ENCODE measurements at regions of chr11 and their contacts with region 1.

Region 1: DNA sequence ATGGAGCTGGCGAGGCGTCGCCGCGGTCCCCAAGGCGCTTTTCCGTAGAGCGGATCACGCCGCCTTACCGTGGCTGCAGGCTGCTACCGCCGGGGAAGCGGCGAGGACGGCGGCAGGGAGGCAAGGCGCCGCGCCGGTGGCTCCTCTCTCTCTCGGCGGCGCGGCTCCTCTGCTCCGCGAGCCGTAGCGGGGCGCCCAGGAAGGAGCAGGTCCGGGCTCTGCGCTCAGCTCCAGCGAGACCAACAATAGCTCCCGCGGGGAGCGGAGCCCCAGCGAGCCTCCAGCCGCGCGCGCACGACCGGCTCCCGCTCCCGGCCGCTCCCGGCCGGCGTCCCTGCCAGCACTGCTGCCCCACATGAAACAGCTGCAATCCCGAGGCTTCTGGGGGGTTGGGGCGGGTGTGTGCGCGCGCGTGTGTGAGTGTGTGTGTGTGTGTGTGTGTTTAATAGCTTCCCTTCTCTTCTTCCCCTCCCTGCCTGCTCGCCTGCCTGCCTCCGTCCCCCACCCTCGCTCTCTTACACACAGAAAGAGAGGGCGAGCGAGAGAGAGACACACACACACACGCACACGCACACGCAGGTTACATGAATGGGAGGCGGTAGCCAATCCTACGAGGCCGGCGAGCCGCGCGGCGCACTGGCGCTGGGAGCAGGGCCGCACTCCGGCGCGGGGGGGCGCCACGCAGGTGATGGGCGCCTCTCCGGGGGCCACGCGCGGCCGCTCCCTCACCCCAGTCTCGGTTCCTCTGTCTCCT is at the start of gene TENM4:
- DNase-seq: peak in 1 of 2 experiments; percentile 69
- H3K4me3 ChIP-seq: peak within 1 kb of the TSS; percentile 56 to 80 (median 63)
- H3K27ac ChIP-seq: no peak within 1 kb of the TSS
- H3K4me1 ChIP-seq: peaks cover 0 to 15% (median 10%) of the 10 kb centered on the region in 4 experiments; a peak in 6 of 7 replicates
- H3K27me3 ChIP-seq: peaks cover 12 to 64% (median 54%) of the 10 kb centered on the region in 4 experiments
- CTCF ChIP-seq: peak; percentile 46 to 61 (median 56)
- EP300 ChIP-seq: no peak
- POLR2A ChIP-seq: no peak
- RAD21 ChIP-seq: peak in 1 of 2 experiments; percentile 41; a peak in 2 of 4 replicates
- total RNA-seq, gene TENM4: 7.2 and 8.8 TPM in 2 replicates

Region 2: DNA sequence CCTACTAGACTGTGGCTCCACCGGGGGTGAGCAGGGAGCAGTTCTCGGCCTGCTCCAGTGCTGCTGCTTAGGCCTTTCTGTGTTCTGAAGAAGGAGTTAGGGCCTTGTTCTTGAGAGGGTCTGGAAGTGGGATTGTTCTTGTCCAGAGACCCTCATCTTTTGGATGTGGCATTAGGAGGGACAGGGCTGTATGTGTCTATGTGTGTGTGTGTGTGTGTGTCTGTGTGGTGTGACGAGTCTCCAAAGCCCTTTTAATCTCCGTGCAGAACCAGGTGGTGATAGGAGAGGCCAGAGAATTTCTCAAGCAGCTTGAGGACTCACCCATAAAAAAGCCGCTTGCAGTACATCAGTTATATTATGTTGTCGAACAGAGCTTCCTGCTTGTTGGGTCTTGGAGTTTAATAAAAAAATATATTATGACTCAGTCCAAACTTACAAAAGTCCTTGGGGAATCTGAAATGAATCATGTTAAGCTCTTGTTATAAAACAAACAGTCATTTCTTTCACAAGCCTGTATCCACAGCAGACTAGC is 196.3 kb before region 1 on chr11:
- CTCF ChIA-PET with region 1: no interaction called
- POLR2A ChIA-PET with region 1: no interaction called
- DNase-seq: no peak
- H3K4me3 ChIP-seq: no peak overlapping the region
- H3K27ac ChIP-seq: no peak overlapping the region
- H3K4me1 ChIP-seq: peaks cover 0 to 4% (median 3%) of the 10 kb centered on the region in 4 experiments; a peak in 4 of 7 replicates
- H3K27me3 ChIP-seq: no peaks in the 10 kb centered on the region
- CTCF ChIP-seq: no peak
- EP300 ChIP-seq: no peak
- POLR2A ChIP-seq: no peak
- RAD21 ChIP-seq: no peak

Region 3: DNA sequence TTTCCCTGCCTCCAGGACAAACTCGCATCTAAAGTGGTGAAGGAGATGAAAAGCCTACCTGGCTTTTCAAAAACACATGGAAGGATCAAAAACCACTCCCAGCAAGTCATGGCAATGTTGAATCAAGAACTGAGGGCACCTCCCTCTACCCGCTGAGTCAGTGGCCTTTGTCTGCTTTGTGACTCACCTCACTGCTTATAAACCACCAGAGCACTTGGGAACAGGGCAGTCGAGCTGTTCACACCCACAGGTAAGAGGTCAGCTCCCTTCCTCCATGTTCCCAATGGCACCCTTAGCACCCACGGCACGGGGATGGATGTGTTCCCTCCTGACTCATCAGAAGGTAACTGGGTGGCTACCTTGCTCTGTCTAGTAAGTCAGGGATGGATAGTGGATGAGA is 21.5 kb before region 1 on chr11:
- CTCF ChIA-PET with region 1: interaction called, 18 read pairs
- POLR2A ChIA-PET with region 1: interaction called, 5 read pairs
- DNase-seq: no peak
- H3K4me3 ChIP-seq: no peak overlapping the region
- H3K27ac ChIP-seq: no peak overlapping the region
- H3K4me1 ChIP-seq: 0 out of 7 replicates have a peak, but pooled peaks cover 0 to 2% (median under 1%) of the 10 kb centered on the region in 4 experiments
- H3K27me3 ChIP-seq: no peaks in the 10 kb centered on the region; a peak in 1 of 7 replicates
- CTCF ChIP-seq: no peak
- EP300 ChIP-seq: no peak
- POLR2A ChIP-seq: no peak
- RAD21 ChIP-seq: no peak

Region 4: GRCh38 chr11:79471071-79471844 is 30.6 kb after region 1 on chr11:
- CTCF ChIA-PET with region 1: interaction called, 9 read pairs
- POLR2A ChIA-PET with region 1: interaction called, 15 read pairs
- DNase-seq: no peak
- H3K4me3 ChIP-seq: no peak overlapping the region
- H3K27ac ChIP-seq: no peak overlapping the region
- H3K4me1 ChIP-seq: peaks cover 16 to 41% (median 33%) of the 10 kb centered on the region in 4 experiments
- H3K27me3 ChIP-seq: peaks cover 0 to 2% (median 0%) of the 10 kb centered on the region in 4 experiments; a peak in 1 of 7 replicates
- CTCF ChIP-seq: no peak
- EP300 ChIP-seq: no peak
- POLR2A ChIP-seq: no peak
- RAD21 ChIP-seq: no peak

Region 5: DNA sequence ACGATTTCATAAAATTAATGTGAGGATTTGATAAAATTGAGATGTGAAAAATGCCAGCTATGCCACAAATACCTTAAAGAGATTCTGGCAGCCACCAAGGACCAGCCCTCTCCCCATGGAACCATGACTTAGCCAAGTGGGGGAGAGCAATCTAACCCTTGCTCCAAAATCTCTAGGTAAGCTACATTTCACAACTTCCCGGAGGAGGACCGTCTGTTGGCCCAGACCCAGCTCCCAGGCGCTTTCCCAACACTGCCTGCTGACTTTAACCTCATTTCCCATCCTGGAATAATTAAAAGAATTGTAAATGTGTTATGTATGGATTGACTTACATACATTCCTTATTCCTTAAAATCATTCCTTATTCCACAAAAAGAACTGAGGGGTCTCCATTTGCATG is 47.7 kb after region 1 on chr11:
- CTCF ChIA-PET with region 1: interaction called, 36 read pairs
- POLR2A ChIA-PET with region 1: interaction called, 6 read pairs
- DNase-seq: no peak
- H3K4me3 ChIP-seq: no peak overlapping the region
- H3K27ac ChIP-seq: no peak overlapping the region
- H3K4me1 ChIP-seq: peaks cover 10 to 17% (median 13%) of the 10 kb centered on the region in 4 experiments
- H3K27me3 ChIP-seq: no peaks in the 10 kb centered on the region; a peak in 1 of 7 replicates
- CTCF ChIP-seq: no peak
- EP300 ChIP-seq: no peak
- POLR2A ChIP-seq: no peak
- RAD21 ChIP-seq: no peak